Activated B cell treated with CpG ODN at 0.5 μM for 24 hours (primary cell): ENCODE measurements at regions of chr17 and their contacts with region 1.

Region 1: DNA sequence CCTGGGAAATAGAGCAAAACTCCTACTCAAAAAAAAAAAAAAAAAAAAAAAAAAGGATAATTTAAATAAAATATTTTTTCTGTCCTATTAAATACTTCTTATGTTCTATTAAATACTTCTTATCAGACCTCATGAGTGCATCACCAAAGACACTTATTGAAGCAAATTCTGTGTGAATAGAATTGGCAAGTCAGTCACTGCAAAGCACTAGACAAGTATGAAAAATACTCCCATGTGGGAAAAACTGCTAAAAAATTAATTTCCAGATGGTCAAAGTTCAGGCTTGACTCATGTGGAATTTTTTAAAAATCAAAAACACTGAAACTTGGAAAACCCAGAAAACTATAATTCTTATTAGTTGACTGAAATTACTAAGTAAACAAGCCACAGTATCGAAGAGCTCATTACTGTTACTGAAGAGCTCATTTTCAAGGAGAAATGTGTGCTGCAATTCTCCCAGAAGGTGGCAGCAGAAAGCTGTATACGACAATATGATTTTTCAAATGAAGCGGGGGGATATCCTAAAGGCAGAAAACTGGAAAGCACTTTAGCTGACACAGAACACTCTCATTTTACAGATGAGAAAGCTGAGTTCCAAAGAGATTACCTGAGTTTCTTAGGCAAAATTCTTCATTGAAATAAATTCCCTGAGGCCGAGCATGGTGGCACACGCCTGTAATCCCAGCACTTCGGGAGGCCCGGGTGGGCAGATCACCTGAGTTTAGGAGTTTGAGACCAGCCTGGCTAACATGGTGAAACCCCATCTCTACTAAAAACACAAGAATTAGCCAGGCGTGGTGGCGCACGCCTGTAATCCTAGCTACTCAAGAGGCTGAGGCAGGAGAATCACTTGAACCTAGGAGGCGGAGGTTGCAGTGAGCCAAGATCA is 15.9 kb upstream of the FBXO47 start:
- DNase-seq: no peak
- ATAC-seq: peak; percentile 54
- H3K4me3 Mint-ChIP-seq: no peak overlapping the region
- H3K27ac Mint-ChIP-seq: no peak overlapping the region
- H3K4me1 Mint-ChIP-seq: no peaks in the 10 kb centered on the region
- H3K27me3 Mint-ChIP-seq: peaks cover 10% of the 10 kb centered on the region
- CTCF ChIP-seq: peak; percentile 47

Region 2: GRCh38 chr17:38853292-38854219 is 129.5 kb before region 1 on chr17 and contains the start of gene RPL23:
- CTCF ChIA-PET with region 1: interaction called, 7 read pairs
- POLR2A ChIA-PET with region 1: interaction called, 12 read pairs
- intact Hi-C with region 1: no loop called
- DNase-seq: peak; percentile 79
- ATAC-seq: peak; percentile 86
- H3K4me3 Mint-ChIP-seq: peak within 1 kb of the TSS; percentile 99
- H3K27ac Mint-ChIP-seq: peak within 1 kb of the TSS; percentile 100
- H3K4me1 Mint-ChIP-seq: peaks cover 43% of the 10 kb centered on the region
- H3K27me3 Mint-ChIP-seq: no peaks in the 10 kb centered on the region
- CTCF ChIP-seq: no peak
- total RNA-seq, gene RPL23: 2,652 and 3,293 TPM in 2 replicates

Region 3: DNA sequence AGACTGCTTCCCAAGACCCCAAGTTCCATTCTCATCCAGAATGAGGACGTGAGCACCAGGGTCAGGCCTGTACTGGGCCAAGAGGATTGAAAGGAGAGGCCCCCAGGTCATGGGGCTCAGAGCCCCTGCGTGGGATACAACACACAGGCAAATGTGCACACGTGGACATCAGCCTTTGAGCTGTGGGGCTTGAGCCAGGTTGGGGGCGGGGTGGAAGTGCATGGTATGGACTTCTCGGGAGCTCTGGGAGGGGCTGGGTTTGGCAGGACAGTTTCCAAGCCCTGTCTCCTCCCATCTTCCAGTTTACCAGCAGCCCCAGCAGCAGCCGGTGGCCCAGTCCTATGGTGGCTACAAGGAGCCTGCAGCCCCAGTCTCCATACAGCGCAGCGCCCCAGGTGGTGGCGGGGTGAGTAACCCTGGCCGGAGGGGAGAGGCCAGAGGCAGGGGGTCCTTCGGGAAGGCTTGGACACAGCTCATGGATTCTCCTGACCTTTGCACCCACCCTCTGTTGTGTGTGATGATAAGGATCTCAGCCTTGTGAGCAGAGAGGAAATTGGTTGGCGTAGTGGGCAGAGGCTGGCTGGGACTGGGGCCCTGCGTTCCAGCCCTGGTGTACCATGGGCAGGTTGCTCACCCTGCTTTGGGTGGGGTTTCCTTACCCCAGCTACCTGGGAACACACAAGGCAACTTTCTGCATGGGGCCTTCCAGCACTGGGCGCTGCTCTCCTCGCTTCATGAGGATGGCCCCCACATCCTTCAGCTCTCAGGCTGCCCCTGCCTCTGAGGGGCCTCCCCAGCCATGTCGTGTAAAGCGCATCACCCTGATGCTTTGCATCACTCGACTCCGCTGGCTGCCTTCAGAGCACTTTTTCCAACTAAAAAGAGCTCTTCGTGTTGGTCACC is 68.1 kb before region 1 on chr17:
- CTCF ChIA-PET with region 1: no interaction called
- POLR2A ChIA-PET with region 1: no interaction called
- intact Hi-C with region 1: no loop called
- DNase-seq: peak; percentile 10
- ATAC-seq: no peak
- H3K4me3 Mint-ChIP-seq: no peak overlapping the region
- H3K27ac Mint-ChIP-seq: no peak overlapping the region
- H3K4me1 Mint-ChIP-seq: peaks cover 4% of the 10 kb centered on the region
- H3K27me3 Mint-ChIP-seq: no peaks in the 10 kb centered on the region
- CTCF ChIP-seq: no peak

Region 4: GRCh38 chr17:38994026-38994425 is 10.9 kb after region 1 on chr17:
- CTCF ChIA-PET with region 1: interaction called, 10 read pairs
- POLR2A ChIA-PET with region 1: interaction called, 3 read pairs
- intact Hi-C with region 1: no loop called
- DNase-seq: no peak
- ATAC-seq: no peak
- H3K4me3 Mint-ChIP-seq: no peak overlapping the region
- H3K27ac Mint-ChIP-seq: no peak overlapping the region
- H3K4me1 Mint-ChIP-seq: no peaks in the 10 kb centered on the region
- H3K27me3 Mint-ChIP-seq: peaks cover 3% of the 10 kb centered on the region
- CTCF ChIP-seq: no peak

Region 5: DNA sequence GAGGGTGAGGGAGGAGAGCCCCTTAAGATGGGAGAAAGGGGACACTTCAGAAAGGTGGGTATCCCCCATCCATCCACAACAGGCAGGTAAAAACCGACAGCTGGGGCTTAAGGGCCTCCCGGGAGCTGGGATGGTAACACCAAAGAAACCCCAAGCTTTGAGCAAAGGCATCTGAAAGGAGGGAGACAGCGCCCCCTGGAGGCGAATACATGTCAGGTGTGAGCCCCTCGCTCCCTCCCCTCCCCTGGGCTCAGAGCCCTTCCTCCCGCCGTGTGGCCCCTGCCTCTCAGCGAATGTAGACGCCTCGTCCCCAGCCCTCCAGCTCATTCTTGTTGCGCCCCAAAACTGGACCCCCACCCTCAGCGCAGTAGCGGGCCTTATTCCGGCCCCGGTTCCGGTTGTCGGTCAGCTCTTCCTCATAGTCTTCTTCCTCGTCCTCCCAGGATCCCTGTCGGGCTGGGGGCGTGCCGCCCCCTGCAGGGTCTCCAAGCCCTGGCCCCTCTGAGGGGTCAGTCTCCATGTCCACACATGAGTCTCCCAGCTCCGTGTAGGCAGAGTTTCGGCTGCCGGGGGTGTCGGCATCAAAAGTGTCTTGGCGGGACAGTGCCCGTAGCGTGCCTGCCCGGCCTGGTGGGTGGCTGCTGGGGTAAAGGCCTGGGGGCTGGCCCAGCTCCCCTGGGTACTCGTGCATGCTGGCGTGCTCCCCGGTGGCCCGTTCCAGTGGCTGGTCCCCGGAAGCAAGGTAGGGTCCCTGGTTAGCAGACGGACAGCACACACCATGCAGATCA is 192.0 kb after region 1 on chr17:
- CTCF ChIA-PET with region 1: interaction called, 49 read pairs
- POLR2A ChIA-PET with region 1: no interaction called
- intact Hi-C with region 1: loop called (anchors 1 kb)
- DNase-seq: peak; percentile 55
- ATAC-seq: peak; percentile 85
- H3K4me3 Mint-ChIP-seq: peak overlapping the region; percentile 60
- H3K27ac Mint-ChIP-seq: no peak overlapping the region
- H3K4me1 Mint-ChIP-seq: peaks cover 5% of the 10 kb centered on the region
- H3K27me3 Mint-ChIP-seq: peaks cover 19% of the 10 kb centered on the region
- CTCF ChIP-seq: no peak

Region 6: DNA sequence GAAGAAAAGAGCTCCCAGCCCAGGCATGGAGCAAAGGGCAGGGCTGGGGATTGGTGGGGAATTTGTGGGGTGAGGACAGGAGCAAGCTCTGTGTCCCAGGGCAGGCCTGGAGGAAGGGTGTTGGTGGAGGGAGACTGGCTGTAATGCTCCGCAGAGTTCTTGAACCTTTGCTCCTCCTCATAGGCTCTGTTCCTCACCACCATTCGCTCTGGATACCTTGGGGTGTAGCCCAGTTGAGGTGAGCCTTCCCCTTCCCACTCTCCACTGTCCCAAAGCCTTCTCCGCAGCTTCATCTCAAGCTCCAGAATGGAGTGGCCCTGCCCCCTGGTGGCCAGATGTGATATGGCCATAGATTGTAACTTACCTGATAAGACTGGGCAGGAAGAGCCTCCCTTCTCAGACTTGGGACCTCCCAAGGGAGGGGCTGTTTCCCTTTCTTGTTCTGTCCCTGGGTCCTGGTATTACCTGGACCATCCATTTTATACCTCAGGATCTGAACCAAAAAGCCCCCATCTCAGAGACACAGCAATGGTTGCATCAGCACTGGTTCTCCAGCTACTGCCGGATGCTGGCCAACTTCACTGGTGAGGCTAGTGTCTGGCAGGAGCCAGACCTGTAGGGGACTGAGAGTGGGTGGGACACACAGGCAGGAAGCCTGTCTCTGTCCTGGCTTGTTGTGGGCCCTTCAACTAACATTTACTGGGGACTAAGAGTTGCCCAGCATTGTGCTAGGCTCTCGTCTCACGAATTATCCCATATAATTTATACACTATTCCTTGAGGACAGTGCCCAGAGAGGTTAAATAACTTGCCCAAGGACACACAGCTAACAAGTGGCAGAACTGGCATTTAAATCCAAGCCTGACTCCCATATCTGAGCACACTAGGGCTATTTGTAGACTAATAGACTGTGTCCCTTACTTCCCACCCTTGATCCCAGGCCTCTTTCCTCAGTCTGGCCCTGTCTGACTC is 261.8 kb after region 1 on chr17:
- CTCF ChIA-PET with region 1: interaction called, 38 read pairs
- POLR2A ChIA-PET with region 1: interaction called, 5 read pairs
- intact Hi-C with region 1: loop called (anchors 1 kb)
- DNase-seq: peak; percentile 76
- ATAC-seq: peak; percentile 81
- H3K4me3 Mint-ChIP-seq: peak overlapping the region; percentile 56
- H3K27ac Mint-ChIP-seq: no peak overlapping the region
- H3K4me1 Mint-ChIP-seq: peaks cover 20% of the 10 kb centered on the region
- H3K27me3 Mint-ChIP-seq: peaks cover 3% of the 10 kb centered on the region
- CTCF ChIP-seq: peak; percentile 34

Region 7: DNA sequence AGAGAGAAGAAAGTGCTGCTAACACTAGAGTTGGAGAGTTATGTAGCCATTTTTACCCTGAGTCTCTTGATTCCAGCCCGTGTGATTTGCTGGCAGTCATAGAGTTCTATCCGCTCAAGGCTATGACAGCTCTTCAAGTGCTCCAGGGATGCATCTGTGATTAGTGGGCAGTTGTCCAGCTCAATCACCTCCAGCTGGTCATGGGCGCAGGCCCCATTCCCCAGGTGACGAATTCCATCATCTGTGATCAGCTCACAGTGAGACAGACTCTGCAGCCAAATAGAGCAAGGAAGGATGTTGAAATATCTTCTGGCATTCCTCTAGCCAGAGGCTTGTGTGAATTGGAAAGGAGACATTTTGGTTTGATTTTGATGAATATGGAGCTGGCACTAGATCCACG is 281.0 kb after region 1 on chr17:
- CTCF ChIA-PET with region 1: no interaction called
- POLR2A ChIA-PET with region 1: no interaction called
- intact Hi-C with region 1: no loop called
- DNase-seq: no peak
- ATAC-seq: no peak
- H3K4me3 Mint-ChIP-seq: no peak overlapping the region
- H3K27ac Mint-ChIP-seq: no peak overlapping the region
- H3K4me1 Mint-ChIP-seq: no peaks in the 10 kb centered on the region
- H3K27me3 Mint-ChIP-seq: no peaks in the 10 kb centered on the region
- CTCF ChIP-seq: no peak